ENCODE measurements at regions of chr17 and their contacts with region 1.

Region 1: GRCh38 chr17:1684378-1685189 is at the start of gene PRPF8:
- DNase-seq: peak; percentile 99
- ATAC-seq: peak; percentile 100
- H3K4me3 Mint-ChIP-seq: peak within 1 kb of the TSS; percentile 98
- H3K27ac Mint-ChIP-seq: peak within 1 kb of the TSS; percentile 93
- H3K4me1 Mint-ChIP-seq: peaks cover 34% of the 10 kb centered on the region
- H3K27me3 Mint-ChIP-seq: no peaks in the 10 kb centered on the region
- total RNA-seq, gene PRPF8: 391 to 425 TPM

Region 2: GRCh38 chr17:1673041-1673785 is 11.4 kb before region 1 on chr17:
- CTCF ChIA-PET with region 1: interaction called, 41 read pairs
- POLR2A ChIA-PET with region 1: interaction called, 3 read pairs
- intact Hi-C with region 1: no loop called
- DNase-seq: peak; percentile 34
- ATAC-seq: peak; percentile 62
- H3K4me3 Mint-ChIP-seq: no peak overlapping the region
- H3K27ac Mint-ChIP-seq: peak overlapping the region; percentile 70
- H3K4me1 Mint-ChIP-seq: peaks cover 11% of the 10 kb centered on the region
- H3K27me3 Mint-ChIP-seq: no peaks in the 10 kb centered on the region

Region 3: DNA sequence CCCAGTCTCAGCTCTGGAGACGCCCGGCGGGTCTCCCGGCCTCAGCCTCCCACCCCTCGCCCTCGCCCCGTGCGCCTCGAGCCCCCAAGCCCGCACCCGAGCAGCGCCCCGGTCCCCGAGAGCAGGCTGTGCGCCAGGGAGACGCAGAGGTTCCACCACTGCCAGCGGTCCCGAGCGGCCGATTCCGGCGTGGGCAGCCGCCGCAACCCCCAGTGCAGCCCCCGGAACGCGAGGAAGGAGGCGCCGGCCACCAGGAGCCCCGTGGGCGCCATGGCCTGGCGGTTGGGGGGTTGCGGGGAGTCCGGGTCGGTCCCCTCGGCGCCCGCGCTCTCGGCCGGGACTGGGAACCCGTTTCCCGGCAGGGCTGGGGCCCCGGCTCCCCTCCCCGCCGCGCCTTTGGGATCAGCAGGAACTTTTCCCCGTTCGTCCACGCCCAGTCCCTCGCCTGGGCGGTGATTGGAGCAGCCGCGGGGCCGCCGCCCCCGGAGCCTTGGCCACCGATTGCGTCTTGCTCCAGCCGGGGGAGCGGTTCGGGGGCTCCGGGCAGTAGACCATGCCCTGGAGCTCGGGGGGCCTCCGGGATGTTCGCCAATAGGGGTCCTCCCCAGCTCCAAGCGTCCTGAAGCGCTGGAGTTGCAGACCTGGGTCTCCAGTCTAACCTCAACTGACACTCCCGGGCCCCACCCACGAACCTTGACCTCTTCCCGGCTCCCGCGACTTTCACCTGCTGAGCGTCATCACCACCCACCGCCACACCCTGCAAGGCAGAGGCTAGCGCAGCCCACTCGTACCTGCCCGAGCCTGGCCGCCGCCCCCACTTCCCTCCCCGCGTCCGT is 25.6 kb after region 1 on chr17 and contains the start of gene TLCD2:
- CTCF ChIA-PET with region 1: no interaction called
- POLR2A ChIA-PET with region 1: no interaction called
- intact Hi-C with region 1: loop called in 1 of 2 experiments (anchors 1 kb)
- DNase-seq: no peak
- ATAC-seq: peak; percentile 38
- H3K4me3 Mint-ChIP-seq: peak within 1 kb of the TSS; percentile 48
- H3K27ac Mint-ChIP-seq: no peak within 1 kb of the TSS
- H3K4me1 Mint-ChIP-seq: peaks cover 18% of the 10 kb centered on the region
- H3K27me3 Mint-ChIP-seq: peaks cover 20% of the 10 kb centered on the region
- total RNA-seq, gene TLCD2: 0.30 to 0.39 TPM

Region 4: DNA sequence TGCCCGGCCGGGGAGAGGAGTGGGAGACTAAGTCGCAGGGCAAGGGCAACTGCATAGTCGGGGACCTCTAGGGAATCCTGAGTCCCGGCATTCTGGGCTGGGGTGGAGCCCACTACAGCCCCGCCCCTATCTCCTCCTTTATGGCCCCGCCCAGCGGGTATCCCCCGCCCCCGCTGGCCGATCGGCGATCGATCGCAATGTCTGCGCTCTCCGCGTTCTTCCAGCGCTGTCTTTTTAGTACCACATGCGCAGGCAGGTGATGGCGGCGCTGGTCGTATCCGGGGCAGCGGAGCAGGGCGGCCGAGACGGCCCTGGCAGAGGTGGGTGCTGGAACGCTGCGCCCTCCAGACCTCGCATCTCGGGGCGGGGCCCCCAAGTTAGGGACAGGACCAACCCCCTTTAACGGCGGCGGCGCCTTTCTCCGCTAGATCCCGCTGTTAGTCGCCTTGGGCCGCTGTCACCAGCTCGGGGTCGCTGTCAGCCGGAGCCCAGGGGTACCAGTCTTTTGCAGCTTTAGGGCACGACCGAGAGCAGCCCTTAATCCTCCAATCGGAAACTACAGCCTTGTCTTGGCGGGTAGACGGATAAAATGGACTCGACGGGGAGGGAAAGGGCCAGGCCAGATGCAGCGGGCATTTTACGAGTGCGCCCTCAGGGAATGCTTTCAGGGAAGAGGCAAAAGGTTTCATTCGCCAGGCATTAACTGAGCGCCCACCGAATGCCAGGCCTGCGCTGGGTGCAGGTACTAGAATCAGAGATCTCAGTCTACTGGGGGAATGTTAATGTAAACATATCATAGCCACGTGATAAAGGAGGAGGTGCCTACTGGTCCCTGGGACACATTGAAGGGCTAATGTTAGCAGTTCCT is 345.6 kb after region 1 on chr17 and contains the start of gene DPH1:
- CTCF ChIA-PET with region 1: no interaction called
- POLR2A ChIA-PET with region 1: no interaction called
- intact Hi-C with region 1: loop called in 1 of 2 experiments (anchors 1 kb)
- DNase-seq: peak; percentile 94
- ATAC-seq: peak; percentile 91
- H3K4me3 Mint-ChIP-seq: peak within 1 kb of the TSS; percentile 88
- H3K27ac Mint-ChIP-seq: peak within 1 kb of the TSS; percentile 78
- H3K4me1 Mint-ChIP-seq: peaks cover 24% of the 10 kb centered on the region
- H3K27me3 Mint-ChIP-seq: peaks cover 20% of the 10 kb centered on the region
- total RNA-seq, gene DPH1: 29.1 to 37.0 TPM

Region 5: DNA sequence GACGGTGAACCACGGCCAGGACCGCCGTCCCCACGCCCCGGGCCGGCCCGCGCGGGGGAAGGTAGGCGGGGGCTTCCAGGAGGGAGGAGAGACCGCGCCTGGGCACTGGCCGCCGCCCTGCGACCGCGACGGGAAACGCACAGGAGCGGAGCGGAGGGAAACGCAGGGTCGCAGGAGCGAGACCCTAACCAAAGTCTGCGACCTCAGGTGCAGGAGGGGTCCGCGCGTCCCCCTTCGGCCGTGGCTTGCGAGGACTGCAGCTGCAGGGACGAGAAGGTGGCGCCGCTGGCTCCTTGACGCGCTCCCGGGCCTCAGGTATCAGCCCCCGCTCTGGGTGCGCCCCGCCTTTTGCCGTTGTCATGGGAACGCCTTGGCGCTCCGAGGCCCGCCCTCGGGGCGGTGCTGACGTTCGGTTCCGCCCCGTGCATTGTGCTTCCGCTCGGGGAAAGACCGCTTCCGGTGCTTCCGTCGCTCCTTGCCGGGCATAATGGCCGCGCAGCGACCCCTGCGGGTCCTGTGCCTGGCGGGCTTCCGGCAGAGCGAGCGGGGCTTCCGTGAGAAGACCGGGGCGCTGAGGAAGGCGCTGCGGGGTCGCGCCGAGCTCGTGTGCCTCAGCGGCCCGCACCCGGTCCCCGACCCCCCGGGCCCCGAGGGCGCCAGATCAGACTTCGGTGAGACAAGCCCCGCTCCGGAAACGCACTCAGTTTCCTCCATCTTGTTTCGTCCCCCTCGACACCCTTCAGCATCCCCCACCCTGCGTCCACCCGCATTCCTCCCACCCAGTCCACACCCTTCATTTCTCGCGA is 357.2 kb after region 1 on chr17 and contains the start of gene OVCA2:
- CTCF ChIA-PET with region 1: no interaction called
- POLR2A ChIA-PET with region 1: no interaction called
- intact Hi-C with region 1: loop called in 1 of 2 experiments (anchors 1 kb)
- DNase-seq: peak; percentile 99
- ATAC-seq: peak; percentile 92
- H3K4me3 Mint-ChIP-seq: peak within 1 kb of the TSS; percentile 95
- H3K27ac Mint-ChIP-seq: peak within 1 kb of the TSS; percentile 95
- H3K4me1 Mint-ChIP-seq: peaks cover 23% of the 10 kb centered on the region
- H3K27me3 Mint-ChIP-seq: no peaks in the 10 kb centered on the region
- total RNA-seq, gene OVCA2: 31.4 to 38.6 TPM

Measured in activated CD4-positive, alpha-beta T cell treated with anti-CD3 and anti-CD28 coated beads for 36 hours (primary cell).